Panc1 (cell line): ENCODE measurements at regions of chr12 and their contacts with region 1.

Region 1: GRCh38 chr12:868722-869121 is 80.8 kb downstream of the RAD52 start:
- DNase-seq: no peak
- ATAC-seq: no peak
- H3K4me3 ChIP-seq: no peak overlapping the region
- H3K27ac ChIP-seq: no peak overlapping the region
- H3K4me1 ChIP-seq: no peaks in the 10 kb centered on the region
- H3K27me3 ChIP-seq: no peaks in the 10 kb centered on the region
- CTCF ChIP-seq: peak; percentile 23

Region 2: DNA sequence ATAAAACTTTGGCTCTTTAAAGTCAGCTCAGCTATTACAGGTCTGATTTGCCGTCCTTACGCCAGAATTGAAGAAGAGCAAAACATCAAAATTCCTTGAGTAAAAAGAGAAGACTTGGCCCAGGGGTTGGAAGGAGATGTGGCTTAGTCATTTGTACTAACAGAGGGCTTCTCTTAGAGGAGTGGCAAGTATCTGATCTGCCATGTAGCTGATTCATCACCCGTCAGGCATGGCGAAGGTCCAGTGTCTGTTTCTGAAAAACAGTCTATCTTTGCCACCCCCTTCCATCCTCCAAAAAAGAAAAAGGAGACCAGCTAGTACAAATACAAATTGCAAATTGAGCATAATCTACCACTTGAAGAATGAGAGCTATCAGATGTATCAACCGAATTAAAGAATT is 11.1 kb before region 1 on chr12:
- CTCF ChIA-PET with region 1: no interaction called
- POLR2A ChIA-PET with region 1: interaction called, 14 read pairs
- in situ Hi-C with region 1: no loop called
- intact Hi-C with region 1: no loop called
- DNase-seq: no peak
- ATAC-seq: no peak
- H3K4me3 ChIP-seq: no peak overlapping the region
- H3K27ac ChIP-seq: no peak overlapping the region
- H3K4me1 ChIP-seq: no peaks in the 10 kb centered on the region; the same call in 1 of the 2 replicates
- H3K27me3 ChIP-seq: no peaks in the 10 kb centered on the region
- CTCF ChIP-seq: no peak